Left ventricle myocardium inferior (tissue), 1 donor: ENCODE measurements at regions of chr5 and their contacts with region 1.

Region 1: DNA sequence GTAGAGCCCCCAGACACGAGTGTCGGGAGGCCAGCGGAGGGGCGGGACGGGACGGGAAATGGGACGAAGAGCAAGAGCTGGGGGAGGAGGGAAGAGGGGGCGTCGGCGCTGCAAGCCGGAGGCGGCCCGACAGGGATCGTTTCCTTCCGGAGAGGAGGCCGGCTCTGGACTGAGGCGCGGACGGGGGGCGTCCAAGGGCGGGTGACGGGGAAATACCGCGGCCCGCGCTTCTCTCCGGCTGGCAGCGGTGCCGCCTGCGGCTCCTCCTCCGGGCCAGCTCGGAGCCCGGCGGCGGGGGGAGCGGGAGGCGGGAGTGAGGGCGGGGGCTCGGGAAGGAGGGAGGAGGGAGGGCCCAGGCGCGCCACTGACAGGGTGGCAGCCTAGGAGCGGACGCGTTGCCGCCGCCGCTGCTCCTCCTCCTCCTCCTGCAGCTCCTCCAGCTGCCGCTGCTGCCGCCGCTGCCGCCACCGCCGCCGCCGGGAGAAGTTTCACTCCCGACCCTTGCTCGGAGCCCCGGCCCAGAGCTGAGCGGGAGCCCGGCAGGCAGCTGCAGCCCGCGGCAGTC is at the start of gene CHSY3:
- DNase-seq: peak; percentile 84
- H3K4me3 ChIP-seq: peak within 1 kb of the TSS; percentile 82
- H3K27ac ChIP-seq: peak within 1 kb of the TSS; percentile 73
- H3K4me1 ChIP-seq: peaks cover 28% of the 10 kb centered on the region
- H3K27me3 ChIP-seq: peaks cover 43% of the 10 kb centered on the region
- CTCF ChIP-seq: peak; percentile 50
- total RNA-seq, gene CHSY3: 0.85 TPM

Region 2: DNA sequence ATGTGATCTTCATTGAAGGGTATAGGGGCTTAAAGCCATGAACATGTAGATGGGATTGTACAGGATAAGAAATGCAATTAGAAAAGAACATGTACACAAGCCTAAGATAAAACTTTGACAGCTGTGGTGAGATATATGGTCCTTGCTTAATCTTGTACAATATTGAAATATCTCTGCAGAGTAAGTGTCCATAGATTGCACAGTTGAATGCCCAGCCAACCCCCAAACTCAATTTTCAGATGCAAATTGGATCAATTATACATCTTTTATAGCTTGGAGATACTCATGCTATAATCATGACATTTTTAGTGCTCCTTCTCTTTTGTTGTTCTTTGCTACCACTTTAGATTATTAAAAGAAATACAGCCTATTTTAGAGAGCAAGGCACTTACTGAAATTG is 59.4 kb before region 1 on chr5:
- intact Hi-C with region 1: no loop called
- DNase-seq: no peak
- H3K4me3 ChIP-seq: no peak overlapping the region
- H3K27ac ChIP-seq: no peak overlapping the region
- H3K4me1 ChIP-seq: no peaks in the 10 kb centered on the region
- H3K27me3 ChIP-seq: peaks cover 7% of the 10 kb centered on the region
- CTCF ChIP-seq: no peak

Region 3: DNA sequence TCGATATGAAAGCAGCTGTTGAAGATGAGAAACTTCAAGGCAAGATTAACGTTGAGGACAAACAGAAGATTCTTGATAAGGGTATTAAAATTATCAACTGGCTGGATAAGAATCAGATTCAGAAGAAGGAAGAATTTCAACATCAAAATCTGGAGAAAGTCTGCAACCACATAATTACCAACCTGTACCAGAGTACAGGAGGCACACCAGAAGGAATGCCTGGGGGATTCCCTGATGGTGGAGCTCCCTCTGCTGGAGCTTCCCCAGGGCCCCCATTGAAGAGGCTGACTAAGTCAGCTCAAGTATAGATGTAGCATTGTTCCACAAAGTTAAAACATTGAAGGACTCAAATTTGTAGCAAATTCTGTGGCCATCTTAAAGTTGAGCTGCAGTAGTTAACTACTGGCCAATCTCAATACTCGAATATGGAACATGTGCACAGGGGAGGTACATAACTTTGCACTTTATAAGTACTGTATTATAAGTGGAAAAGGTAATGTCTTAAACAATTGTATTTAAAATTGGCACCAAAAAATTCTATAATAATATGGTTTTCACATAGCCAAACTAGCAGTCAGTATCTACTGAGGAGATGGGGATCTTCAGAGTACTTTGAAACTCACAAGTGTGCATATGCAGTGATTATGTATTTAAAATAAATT is 237.6 kb after region 1 on chr5:
- intact Hi-C with region 1: loop called (anchors 10 kb)
- DNase-seq: no peak
- H3K4me3 ChIP-seq: no peak overlapping the region
- H3K27ac ChIP-seq: no peak overlapping the region
- H3K4me1 ChIP-seq: no peaks in the 10 kb centered on the region
- H3K27me3 ChIP-seq: no peaks in the 10 kb centered on the region
- CTCF ChIP-seq: peak; percentile 55

Region 4: GRCh38 chr5:131109540-131110255 is 1205.5 kb after region 1 on chr5:
- intact Hi-C with region 1: loop called (anchors 10 kb)
- DNase-seq: no peak
- H3K4me3 ChIP-seq: no peak overlapping the region
- H3K27ac ChIP-seq: no peak overlapping the region
- H3K4me1 ChIP-seq: no peaks in the 10 kb centered on the region
- H3K27me3 ChIP-seq: peaks cover 14% of the 10 kb centered on the region
- CTCF ChIP-seq: peak; percentile 79